ENCODE measurements at regions of chr1 and their contacts with region 1.

Region 1: DNA sequence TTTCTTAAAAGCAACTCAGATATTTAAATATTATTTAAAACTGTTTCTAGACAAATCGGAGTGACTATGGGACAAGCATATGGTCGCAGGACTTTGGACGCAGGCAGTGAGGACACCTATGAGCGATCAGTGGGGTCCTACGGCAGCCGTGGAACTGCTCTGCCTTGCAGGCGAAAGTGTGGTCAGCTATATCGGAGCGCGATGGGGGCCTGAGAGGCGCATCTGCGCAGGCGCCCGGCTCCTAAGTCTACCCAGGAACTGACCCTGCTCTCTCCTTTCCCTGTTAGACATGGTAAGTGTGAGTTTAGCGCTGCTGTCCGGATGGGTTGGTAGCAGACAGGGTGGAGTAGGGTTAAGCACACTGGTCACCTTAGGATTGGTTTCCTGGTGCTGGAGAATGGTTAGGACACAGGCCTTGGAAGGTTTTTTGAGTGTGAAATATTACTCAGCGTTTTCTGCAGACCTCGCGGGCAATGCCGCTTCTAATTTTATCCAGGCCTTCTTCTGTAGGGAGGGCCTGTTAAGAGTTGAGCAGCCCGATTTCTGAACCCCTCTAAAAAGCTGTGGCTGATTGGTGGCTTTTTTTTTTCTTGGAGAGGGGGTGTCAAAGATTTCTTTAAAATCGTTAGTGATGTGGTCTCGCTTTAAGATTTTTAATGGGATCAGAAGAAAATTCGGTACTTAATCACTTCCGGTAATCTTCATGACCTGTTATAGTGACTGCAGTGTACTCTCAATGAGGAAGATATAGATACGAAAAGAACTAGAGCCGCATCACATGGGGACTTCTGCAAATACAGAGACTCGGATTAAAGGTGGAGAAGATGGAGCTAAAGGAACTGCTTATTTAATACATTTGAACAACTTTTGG is at the start of gene RABGGTB:
- DNase-seq: peak; percentile 96
- H3K4me3 Mint-ChIP-seq: peak within 1 kb of the TSS; percentile 99
- H3K27ac Mint-ChIP-seq: peak within 1 kb of the TSS; percentile 99
- H3K4me1 Mint-ChIP-seq: peaks cover 24% of the 10 kb centered on the region
- H3K27me3 Mint-ChIP-seq: no peaks in the 10 kb centered on the region
- total RNA-seq, gene RABGGTB: 158 to 162 TPM

Region 2: DNA sequence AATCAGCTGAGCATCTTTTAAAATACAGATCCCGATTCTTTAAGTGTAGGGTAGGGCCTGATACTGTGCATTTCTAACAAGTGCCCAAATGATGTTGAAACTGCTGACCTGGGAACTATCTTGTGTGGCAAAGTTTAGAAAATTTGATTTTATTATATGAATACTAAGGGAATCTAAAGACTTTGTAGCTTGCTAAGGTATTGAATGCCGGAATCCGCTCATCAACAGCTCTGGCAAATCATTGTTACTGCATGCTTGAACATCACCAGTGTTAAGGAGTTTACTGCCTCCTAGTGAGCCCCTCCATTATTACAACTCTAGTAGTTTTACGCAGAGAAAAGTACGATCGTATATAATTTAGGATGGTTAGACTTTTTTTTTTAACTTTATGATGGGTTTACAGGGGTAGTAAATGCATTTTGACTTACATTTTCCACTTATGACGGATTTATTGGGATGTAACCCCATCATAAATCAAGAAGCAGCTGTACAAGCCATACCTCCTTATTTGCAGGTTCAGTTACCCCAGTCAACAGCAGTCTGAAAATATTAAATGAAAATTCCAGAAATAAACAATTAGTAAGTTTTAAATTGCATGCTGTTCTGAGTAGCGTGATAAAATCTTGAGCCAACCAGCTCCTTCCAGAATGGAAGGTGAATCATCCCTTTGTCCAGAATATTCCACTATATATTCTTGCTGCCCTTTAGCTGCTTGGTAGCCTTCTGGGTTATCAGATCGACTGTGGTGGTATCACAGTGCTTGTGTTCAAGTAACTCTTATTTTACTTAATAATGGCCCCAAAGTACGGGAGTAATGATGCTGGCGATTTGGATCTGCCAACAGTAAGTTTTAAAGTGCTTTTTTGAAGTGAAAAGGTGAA is 1052.4 kb before region 1 on chr1:
- CTCF ChIA-PET with region 1: no interaction called
- intact Hi-C with region 1: loop called (anchors 1 kb)
- DNase-seq: peak; percentile 49
- H3K4me3 Mint-ChIP-seq: peak overlapping the region; percentile 89
- H3K27ac Mint-ChIP-seq: peak overlapping the region; percentile 94
- H3K4me1 Mint-ChIP-seq: peaks cover 37% of the 10 kb centered on the region
- H3K27me3 Mint-ChIP-seq: no peaks in the 10 kb centered on the region

Region 3: DNA sequence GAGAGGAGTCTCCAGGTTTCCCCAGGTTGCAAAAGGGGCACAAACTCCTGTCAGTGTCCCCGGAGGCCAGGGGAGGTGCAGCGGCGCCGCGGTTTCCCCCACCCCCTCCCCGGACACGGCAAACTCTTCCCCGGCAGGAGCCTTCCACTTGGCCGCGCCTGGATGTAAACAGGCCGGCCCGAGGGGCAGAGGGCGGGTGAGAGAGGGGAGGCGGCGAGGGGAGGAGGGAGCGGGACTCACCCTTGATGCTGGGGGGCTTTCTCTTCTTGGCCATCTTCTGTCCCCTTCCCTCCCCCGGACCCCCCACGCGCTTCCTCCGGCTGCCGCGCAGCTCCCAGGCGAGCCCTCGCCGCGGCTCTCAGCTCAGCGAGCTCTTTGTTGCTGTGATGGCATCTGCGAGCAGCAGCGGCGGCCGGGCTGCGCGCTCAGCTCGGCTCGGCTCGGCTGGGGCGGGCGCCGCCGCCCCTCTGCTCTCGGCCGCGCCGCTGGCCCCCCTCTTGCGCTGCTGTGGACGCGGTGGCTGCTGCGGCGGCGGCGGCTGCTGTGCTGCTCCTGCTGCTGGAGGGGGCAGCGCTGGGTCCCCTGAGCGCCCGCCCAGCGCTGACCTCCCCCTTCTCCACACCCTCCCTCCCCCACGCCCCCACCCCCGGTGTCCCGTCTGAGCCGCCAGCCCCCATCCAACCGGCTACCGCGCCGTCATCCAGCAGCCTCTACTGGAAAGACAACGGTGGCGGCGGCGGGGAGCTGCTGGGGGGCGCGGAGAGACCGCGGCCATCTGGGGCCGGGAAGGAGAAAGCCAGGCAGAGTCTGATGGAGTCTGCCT is 170.4 kb before region 1 on chr1:
- CTCF ChIA-PET with region 1: no interaction called
- intact Hi-C with region 1: loop called (anchors 2 kb)
- DNase-seq: peak; percentile 30
- H3K4me3 Mint-ChIP-seq: peak overlapping the region; percentile 69
- H3K27ac Mint-ChIP-seq: no peak overlapping the region
- H3K4me1 Mint-ChIP-seq: peaks cover 16% of the 10 kb centered on the region
- H3K27me3 Mint-ChIP-seq: peaks cover 74% of the 10 kb centered on the region

Region 4: DNA sequence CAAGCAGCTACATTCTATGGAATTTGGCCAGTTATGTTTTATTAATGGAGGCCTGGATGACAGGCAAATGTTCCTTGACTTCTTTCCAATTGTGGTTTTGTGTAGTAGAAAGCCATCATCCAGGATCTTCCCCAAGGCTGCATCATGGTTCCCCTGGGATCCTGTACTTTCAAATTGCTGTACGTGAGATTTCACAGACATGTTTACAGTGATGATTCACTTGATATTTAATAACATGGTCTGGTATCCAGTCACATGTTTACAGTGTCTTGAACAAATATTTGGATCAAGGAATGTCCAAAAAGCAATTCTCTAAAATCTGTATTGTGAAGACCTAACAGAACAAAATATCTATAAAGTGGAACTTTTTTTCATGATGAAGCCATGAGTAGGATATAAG is 220.0 kb after region 1 on chr1:
- CTCF ChIA-PET with region 1: no interaction called
- intact Hi-C with region 1: no loop called
- DNase-seq: no peak
- H3K4me3 Mint-ChIP-seq: no peak overlapping the region
- H3K27ac Mint-ChIP-seq: no peak overlapping the region
- H3K4me1 Mint-ChIP-seq: no peaks in the 10 kb centered on the region
- H3K27me3 Mint-ChIP-seq: no peaks in the 10 kb centered on the region

Region 5: DNA sequence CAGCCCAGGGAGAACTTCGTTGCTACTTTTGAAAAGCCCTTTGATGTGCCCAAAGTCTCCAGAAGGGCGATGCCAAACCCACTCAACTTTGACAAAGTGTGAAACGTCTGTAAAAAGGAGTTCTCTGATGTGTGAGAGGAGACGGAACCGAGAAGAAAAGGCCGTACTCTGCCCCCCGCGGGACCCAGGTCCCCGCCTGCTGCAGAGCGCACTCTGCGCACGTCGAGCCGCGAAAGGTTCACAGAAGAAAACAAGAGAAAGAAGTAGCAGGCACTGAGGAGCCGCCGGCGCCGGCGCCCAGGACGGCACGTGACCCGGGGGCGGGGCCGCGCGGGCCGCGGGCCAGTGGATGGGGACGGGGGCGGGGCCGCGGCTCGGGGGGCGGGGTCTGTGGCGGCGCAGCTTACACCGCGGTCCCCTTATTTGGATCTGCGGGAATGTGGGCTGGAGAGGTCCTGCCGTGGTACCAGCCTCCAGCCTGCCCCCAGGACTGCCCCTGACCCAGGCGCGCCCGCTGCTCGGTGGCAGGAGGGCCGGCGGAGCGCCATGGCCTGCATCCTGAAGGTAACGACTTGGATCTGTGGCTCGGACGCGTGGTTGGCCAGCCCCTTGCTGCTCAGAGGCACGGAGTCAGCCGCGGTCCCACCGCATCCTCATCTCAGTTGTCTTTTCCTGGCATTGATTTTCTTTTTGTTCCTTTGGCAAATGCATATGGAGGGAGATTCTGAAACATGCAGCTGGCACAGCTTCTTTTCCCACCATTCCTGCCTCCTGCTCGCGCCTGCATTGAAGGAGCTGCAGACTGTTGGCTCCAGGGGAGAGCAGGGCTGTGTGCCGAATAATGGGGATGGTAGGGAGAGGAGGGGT is 288.3 kb after region 1 on chr1 and contains the start of gene ST6GALNAC3:
- CTCF ChIA-PET with region 1: no interaction called
- intact Hi-C with region 1: loop called (anchors 2 kb)
- DNase-seq: peak; percentile 78
- H3K4me3 Mint-ChIP-seq: peak within 1 kb of the TSS; percentile 83
- H3K27ac Mint-ChIP-seq: no peak within 1 kb of the TSS
- H3K4me1 Mint-ChIP-seq: peaks cover 25% of the 10 kb centered on the region
- H3K27me3 Mint-ChIP-seq: no peaks in the 10 kb centered on the region
- total RNA-seq, gene ST6GALNAC3: 2.5 to 2.8 TPM

Region 6: DNA sequence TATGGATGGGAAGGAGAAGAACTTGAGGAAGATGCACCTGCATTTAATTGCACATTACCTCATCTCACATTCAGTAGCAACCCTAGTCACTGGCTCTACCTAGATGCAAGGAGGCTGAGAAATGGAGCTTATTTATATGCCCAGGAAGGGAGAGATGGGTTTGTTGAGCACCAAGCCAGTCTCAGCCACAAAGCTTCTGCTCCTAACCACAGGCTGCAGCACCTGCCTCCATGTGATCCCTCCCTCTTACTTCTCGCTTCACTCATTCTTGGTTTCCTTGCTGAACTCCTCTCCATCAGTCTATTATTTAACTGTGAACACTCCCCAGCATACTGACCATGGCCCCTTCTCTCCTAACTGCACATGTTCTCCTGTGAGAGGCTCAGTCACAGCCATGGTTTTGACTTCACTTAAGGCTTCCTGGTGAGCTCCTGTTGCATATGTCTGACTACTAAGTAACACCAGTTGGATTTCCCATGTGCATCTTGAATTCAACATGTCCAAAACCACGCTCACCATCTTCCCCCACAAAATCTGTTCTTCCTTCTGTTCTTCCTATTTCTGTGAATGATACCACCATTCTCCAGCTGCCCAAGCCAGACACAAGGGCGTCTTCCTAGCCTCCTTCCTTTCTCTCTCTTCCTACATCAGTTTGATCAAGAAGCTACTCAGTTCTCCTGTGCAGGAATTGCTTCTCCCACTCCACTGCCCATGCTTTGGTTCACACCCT is 1635.5 kb after region 1 on chr1:
- CTCF ChIA-PET with region 1: no interaction called
- intact Hi-C with region 1: loop called (anchors 5 kb)
- DNase-seq: peak; percentile 42
- H3K4me3 Mint-ChIP-seq: no peak overlapping the region
- H3K27ac Mint-ChIP-seq: no peak overlapping the region
- H3K4me1 Mint-ChIP-seq: peaks cover 49% of the 10 kb centered on the region
- H3K27me3 Mint-ChIP-seq: no peaks in the 10 kb centered on the region

Measured in activated naive CD4-positive, alpha-beta T cell treated with anti-CD3 and anti-CD28 coated beads for 36 hours (primary cell).